Tibial artery (tissue), 4 donors: ENCODE measurements at regions of chr10 and their contacts with region 1.

Region 1: DNA sequence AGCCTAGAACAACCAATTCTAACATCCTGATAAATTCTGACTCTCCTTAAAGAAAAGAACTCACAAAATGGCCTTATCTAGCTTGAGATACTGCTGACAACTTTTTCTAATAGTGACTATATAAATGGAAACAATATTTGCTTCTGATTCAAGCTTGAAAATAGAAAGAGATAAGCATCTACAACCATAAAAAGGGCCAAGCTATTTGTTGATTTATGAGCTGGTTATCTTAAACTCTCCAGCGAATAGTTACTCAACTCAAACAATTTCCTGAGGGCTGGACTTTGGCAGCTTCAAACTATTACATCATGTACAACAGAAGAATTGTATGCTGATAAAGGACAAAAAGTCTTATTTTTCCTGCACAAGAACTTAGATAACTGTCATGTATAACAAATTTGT is 4.6 kb downstream of the USP54 start:
- DNase-seq: peak in 1 of 2 donors; percentile 59
- H3K4me3 ChIP-seq: no peak overlapping the region
- H3K27ac ChIP-seq: peak overlapping the region; percentile 64 to 66
- H3K4me1 ChIP-seq: peaks cover 0 to 37% (median 23%) of the 10 kb centered on the region in 4 donors
- H3K27me3 ChIP-seq: no peaks in the 10 kb centered on the region
- CTCF ChIP-seq: no peak

Region 2: GRCh38 chr10:73281097-73281496 is 305.5 kb before region 1 on chr10:
- intact Hi-C with region 1: no loop called
- DNase-seq: no peak
- H3K4me3 ChIP-seq: no peak overlapping the region
- H3K27ac ChIP-seq: no peak overlapping the region
- H3K4me1 ChIP-seq: peaks cover 0 to 8% (median 0%) of the 10 kb centered on the region in 4 donors
- H3K27me3 ChIP-seq: no peaks in the 10 kb centered on the region
- CTCF ChIP-seq: no peak

Region 3: GRCh38 chr10:73625884-73626752 is 39.5 kb after region 1 on chr10:
- intact Hi-C with region 1: loop called (anchors 5 kb)
- DNase-seq: peak; percentile 95
- H3K4me3 ChIP-seq: peak overlapping the region; percentile 69 to 83
- H3K27ac ChIP-seq: peak overlapping the region; percentile 81 to 90
- H3K4me1 ChIP-seq: peaks cover 0 to 18% (median 7%) of the 10 kb centered on the region in 4 donors
- H3K27me3 ChIP-seq: no peaks in the 10 kb centered on the region
- CTCF ChIP-seq: no peak